ENCODE measurements at regions of chr16 and their contacts with region 1.

Region 1: DNA sequence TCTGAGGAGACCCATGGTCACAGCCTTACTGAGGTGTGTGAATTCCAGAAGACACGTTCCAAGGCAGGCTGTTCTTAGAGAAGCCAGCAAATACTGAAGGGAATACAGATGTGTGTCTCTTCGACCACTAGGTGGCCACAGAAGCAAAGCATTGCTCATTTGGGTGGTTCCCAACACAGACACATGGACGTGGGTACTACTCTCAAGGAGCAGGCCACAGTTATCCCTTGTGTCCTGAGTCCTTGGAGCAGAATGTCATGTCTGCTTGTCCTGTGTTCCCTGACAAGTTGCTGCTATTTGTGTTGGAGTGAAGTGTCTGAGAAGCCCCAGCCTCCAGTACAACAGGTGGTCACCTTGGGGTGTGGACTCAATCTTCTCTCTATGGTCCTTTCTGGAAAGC is 30.3 kb downstream of the HMOX2 start:
- DNase-seq: peak; percentile 79
- CTCF ChIP-seq: peak; percentile 89

Region 2: DNA sequence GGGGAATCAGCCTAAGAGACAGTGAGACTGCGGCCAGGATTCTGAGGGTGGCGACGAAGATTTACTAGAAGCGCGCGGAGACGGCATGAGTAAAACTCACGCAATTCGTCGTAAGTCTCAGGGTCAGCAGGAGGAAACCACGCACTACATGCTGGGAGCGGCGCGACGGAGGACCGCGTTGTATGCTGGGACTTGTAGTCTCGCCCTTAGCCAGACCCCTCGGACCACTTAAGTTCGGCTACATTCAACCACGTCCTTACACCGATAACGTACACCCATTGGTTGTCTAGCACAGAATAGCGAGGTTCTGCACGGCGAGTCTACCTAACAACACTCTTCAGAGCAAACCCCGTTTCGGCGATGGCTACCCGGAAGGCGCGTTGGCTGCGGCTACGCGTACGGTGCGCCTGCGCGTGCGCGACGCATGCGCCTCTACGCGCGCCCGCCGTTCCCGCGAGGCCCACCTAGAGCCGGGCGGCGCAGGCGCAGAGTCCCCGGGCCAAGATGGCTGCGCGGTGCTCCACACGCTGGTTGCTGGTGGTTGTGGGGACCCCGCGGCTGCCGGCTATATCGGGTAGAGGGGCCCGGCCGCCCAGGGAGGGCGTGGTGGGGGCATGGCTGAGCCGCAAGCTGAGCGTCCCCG is 81.0 kb before region 1 on chr16 and contains the start of gene DNAJA3:
- CTCF ChIA-PET with region 1: no interaction called
- POLR2A ChIA-PET with region 1: no interaction called
- DNase-seq: peak; percentile 98
- CTCF ChIP-seq: no peak

Region 3: GRCh38 chr16:4517812-4518680 is 11.6 kb after region 1 on chr16:
- CTCF ChIA-PET with region 1: interaction called, 53 read pairs
- POLR2A ChIA-PET with region 1: no interaction called
- DNase-seq: no peak
- CTCF ChIP-seq: peak; percentile 62

Region 4: GRCh38 chr16:4544473-4544872 is 38.0 kb after region 1 on chr16:
- CTCF ChIA-PET with region 1: interaction called, 138 read pairs
- POLR2A ChIA-PET with region 1: no interaction called
- DNase-seq: no peak
- CTCF ChIP-seq: no peak

Region 5: DNA sequence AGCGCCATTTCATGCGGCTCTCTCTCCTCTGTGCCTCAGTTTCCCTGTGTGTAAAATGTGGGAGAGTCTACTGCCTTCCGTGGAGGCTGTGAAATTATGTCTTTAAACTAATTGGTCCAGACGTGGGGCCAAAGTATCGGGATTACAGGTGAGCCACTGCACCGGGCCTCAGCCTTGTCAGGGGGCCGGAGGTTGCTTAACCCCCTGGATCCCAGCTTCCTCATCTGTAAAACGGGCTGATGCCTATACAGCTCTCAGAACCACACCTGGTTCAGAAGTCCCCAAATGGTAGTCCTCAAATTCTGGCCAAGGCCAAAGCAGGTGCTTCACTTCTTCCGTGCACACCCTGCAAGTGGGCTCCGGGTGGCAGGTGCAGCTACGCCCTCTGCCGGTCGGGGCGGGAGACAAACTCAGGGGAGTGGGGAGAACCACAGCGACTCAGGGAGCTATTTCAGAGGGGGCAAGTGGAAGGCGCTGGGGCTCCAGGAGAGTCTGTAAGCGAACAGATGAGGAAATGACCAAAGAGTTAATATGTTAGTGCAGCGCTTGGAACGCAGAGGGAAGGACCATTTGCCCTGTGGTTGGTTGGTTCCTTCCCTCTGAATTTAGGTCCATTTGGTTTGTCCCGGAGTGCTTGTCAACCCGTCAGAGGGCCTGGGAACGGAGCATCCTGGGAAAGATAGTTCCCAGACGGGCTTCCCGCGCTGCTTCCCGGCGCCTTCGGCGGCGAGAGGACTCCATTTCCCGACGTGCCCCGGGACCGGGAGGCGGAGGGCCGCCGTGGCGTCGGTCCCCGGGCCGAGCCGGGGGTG is 117.8 kb after region 1 on chr16 and contains the start of gene MGRN1:
- CTCF ChIA-PET with region 1: interaction called, 11 read pairs
- POLR2A ChIA-PET with region 1: no interaction called
- DNase-seq: peak; percentile 93
- CTCF ChIP-seq: peak; percentile 93

Measured in GM10248 (cell line).